CD8-positive, alpha-beta T cell (primary cell): ENCODE measurements at regions of chr15 and their contacts with region 1.

Region 1: GRCh38 chr15:43285609-43286037 is 18.9 kb upstream of the TGM5 start:
- DNase-seq: peak; percentile 15 to 75 (median 56)
- ATAC-seq: peak; percentile 89
- H3K4me3 ChIP-seq: no peak overlapping the region
- H3K4me3 Mint-ChIP-seq: no peak overlapping the region
- H3K27ac ChIP-seq: no peak overlapping the region
- H3K27ac Mint-ChIP-seq: no peak overlapping the region
- H3K4me1 ChIP-seq: no peaks in the 10 kb centered on the region
- H3K4me1 Mint-ChIP-seq: peaks cover 2% of the 10 kb centered on the region
- H3K27me3 ChIP-seq: peaks cover 0 to 3% of the 10 kb centered on the region in 2 experiments
- H3K27me3 Mint-ChIP-seq: peaks cover 14% of the 10 kb centered on the region
- CTCF ChIP-seq: peak; percentile 73

Region 2: DNA sequence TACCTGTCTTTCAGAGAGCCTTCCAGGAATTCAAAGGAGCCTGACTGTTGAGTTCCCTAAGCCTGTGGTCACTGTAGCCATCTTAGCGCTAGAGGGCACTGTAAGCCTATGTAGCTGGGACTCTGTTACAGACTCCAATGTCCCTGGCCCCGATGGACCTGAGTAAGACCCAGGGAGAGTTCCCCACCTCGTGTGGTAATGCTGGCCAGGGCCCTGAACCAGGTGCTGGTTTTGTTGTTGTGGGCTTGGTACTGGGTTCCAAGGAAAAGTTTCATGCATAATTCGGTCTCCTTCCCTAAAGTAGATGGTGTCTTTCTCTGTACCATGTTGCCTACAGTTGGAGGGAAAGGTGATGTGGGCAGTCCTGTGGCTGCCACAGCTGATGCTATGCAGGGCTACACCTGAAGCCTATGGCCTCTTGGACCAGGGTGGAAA is 581.1 kb before region 1 on chr15:
- CTCF ChIA-PET with region 1: interaction called, 3 read pairs
- POLR2A ChIA-PET with region 1: no interaction called
- intact Hi-C with region 1: loop called in 1 of 2 experiments (anchors 1 kb)
- DNase-seq: peak; percentile 29 to 76 (median 59)
- ATAC-seq: peak; percentile 84
- H3K4me3 ChIP-seq: no peak overlapping the region
- H3K4me3 Mint-ChIP-seq: no peak overlapping the region
- H3K27ac ChIP-seq: no peak overlapping the region
- H3K27ac Mint-ChIP-seq: no peak overlapping the region
- H3K4me1 ChIP-seq: no peaks in the 10 kb centered on the region
- H3K4me1 Mint-ChIP-seq: no peaks in the 10 kb centered on the region
- H3K27me3 ChIP-seq: no peaks in the 10 kb centered on the region
- H3K27me3 Mint-ChIP-seq: no peaks in the 10 kb centered on the region
- CTCF ChIP-seq: peak; percentile 64

Region 3: DNA sequence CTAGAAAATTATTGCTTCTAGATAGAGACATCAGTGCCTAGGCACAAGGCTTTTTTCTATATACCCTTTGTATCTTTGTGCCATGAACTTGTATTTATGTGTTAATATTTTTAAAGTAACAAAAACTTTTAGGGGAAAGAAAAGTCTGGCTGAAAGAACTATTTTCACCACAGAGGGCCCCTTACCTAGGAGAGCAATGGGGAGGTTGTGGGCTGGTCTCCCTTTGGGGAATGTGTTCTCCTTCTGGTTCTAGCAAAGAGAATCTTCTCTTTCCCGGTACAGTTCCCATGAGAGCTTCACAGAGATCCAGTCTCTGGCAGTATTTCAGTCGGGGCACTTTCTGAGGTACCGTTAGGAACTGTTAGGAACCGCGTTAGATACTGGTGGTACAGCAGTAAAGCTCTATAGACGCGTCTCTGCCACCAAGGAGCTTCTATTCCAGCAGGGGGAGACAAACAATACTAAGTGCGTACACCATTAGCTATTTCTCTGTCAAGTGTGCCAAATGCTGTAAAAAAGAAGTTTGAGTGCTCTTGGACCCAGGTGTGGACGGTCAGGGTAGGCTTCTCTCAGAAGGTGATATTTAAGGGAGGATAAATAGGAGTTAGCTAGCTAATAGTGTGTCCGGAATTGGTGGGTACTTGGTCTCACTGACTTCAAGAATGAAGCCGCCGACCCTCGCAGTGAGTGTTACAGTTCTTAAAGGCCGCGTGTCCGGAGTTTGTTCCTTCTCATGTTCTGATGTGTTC is 60.2 kb before region 1 on chr15:
- CTCF ChIA-PET with region 1: interaction called, 121 read pairs
- POLR2A ChIA-PET with region 1: interaction called, 10 read pairs
- intact Hi-C with region 1: loop called in 1 of 2 experiments (anchors 1 kb)
- DNase-seq: peak in 8 of 9 experiments; percentile 17 to 78 (median 44)
- ATAC-seq: peak; percentile 86
- H3K4me3 ChIP-seq: no peak overlapping the region
- H3K4me3 Mint-ChIP-seq: peak overlapping the region; percentile 56
- H3K27ac ChIP-seq: no peak overlapping the region
- H3K27ac Mint-ChIP-seq: no peak overlapping the region
- H3K4me1 ChIP-seq: no peaks in the 10 kb centered on the region
- H3K4me1 Mint-ChIP-seq: peaks cover 8% of the 10 kb centered on the region
- H3K27me3 ChIP-seq: no peaks in the 10 kb centered on the region
- H3K27me3 Mint-ChIP-seq: peaks cover 10% of the 10 kb centered on the region
- CTCF ChIP-seq: peak; percentile 73

Region 4: DNA sequence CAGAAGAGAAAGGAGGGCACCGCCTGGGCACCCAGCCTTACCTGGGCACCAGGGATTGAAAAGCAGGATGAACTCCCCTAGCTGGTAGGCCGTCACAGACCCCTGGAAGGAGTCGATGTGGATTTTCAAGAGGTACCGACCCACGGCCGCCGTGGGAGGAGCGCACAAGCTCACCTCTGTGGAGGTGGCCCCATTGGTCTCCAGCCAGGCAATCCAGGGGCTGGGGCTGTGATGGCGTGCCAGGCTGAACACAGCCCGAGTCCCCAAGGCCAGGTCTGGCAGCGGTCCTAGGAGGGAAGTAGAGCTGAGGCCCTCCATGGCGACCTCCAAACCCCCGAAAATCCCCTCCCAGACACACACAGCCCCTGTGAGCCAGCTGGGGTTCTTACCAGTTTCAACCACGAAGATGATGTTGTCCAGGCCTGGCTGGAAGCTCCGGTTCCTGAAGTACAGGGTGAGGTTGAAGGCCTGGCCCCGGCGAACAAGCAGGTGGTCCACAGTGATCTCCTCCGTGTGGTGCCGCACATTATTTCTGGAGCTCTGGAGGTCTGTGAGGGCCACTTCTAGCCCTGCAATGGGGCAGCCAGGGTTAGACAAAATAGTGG is 25.5 kb before region 1 on chr15:
- CTCF ChIA-PET with region 1: interaction called, 15 read pairs
- POLR2A ChIA-PET with region 1: no interaction called
- intact Hi-C with region 1: no loop called
- DNase-seq: no peak
- ATAC-seq: no peak
- H3K4me3 ChIP-seq: no peak overlapping the region
- H3K4me3 Mint-ChIP-seq: no peak overlapping the region
- H3K27ac ChIP-seq: no peak overlapping the region
- H3K27ac Mint-ChIP-seq: no peak overlapping the region
- H3K4me1 ChIP-seq: no peaks in the 10 kb centered on the region
- H3K4me1 Mint-ChIP-seq: no peaks in the 10 kb centered on the region
- H3K27me3 ChIP-seq: no peaks in the 10 kb centered on the region
- H3K27me3 Mint-ChIP-seq: no peaks in the 10 kb centered on the region
- CTCF ChIP-seq: no peak

Region 5: DNA sequence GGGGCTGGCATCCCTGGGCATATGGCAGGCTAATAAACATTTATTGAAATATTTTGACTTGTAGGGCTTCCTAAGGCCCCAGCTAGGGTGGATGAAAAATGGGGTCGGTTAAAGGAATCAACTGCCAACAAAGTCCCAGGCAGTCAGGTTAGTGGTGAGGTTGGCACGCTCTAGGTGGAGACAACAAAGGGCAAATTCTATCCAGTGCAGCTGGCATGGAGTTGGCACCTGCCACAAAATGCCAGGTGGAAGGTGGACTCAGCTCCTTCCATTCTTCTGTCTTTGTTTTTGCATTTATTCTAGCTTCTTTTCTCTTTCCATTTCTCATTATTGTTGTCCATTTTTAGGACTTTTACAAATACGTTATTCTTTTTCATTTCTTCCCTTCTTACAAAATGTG is 13.8 kb after region 1 on chr15:
- CTCF ChIA-PET with region 1: interaction called, 31 read pairs
- POLR2A ChIA-PET with region 1: no interaction called
- intact Hi-C with region 1: no loop called
- DNase-seq: no peak
- ATAC-seq: no peak
- H3K4me3 ChIP-seq: no peak overlapping the region
- H3K4me3 Mint-ChIP-seq: no peak overlapping the region
- H3K27ac ChIP-seq: no peak overlapping the region
- H3K27ac Mint-ChIP-seq: no peak overlapping the region
- H3K4me1 ChIP-seq: no peaks in the 10 kb centered on the region
- H3K4me1 Mint-ChIP-seq: no peaks in the 10 kb centered on the region
- H3K27me3 ChIP-seq: no peaks in the 10 kb centered on the region
- H3K27me3 Mint-ChIP-seq: peaks cover 18% of the 10 kb centered on the region
- CTCF ChIP-seq: no peak